Pancreas (tissue), 10 donors: ENCODE measurements at regions of chr12 and their contacts with region 1.

Region 1: DNA sequence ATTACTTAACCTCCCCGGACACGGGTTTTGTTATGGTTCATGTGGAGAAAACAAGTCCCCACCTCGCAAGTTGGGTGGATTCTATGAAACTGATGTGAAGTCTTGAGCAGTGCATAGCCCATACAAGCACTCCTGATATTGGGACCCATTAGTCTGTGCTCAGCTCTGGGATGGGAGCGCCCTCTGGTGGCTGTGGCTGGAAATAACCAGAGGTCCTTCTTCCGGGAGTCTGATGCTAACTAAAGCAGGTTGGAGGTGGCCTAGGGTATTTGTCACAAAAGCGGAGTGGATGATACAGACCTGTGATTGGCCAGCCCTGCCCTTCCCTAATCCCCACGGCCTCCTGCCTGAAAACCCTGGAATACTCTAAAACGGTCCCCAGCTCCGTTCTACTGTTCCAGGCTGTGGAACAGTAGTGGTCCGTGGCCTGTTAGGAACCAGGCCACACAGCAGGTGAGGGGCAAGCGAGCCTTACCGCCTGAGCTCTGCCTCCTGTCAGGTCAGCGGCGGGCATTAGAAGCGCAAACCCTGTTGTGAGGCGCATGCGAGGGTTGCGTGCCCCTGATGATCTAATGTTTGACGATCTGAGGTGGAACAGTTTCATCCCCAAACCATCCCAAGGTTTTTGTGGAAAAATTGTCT is 6.4 kb downstream of the SLC48A1 start:
- DNase-seq: peak; percentile 74 to 99 (median 90)
- ATAC-seq: peak; percentile 81 to 92 (median 88)
- H3K4me3 ChIP-seq: no peak overlapping the region
- H3K27ac ChIP-seq: no peak overlapping the region
- H3K4me1 ChIP-seq: peaks cover 0 to 5% (median 0%) of the 10 kb centered on the region in 3 donors
- H3K27me3 ChIP-seq: no peaks in the 10 kb centered on the region
- CTCF ChIP-seq: peak; percentile 85 to 91 (median 90)

Region 2: GRCh38 chr12:47032644-47033043 is 746.8 kb before region 1 on chr12:
- intact Hi-C with region 1: loop called in 1 of 3 experiments (anchors 5 kb)
- DNase-seq: no peak
- ATAC-seq: peak; percentile 78 to 89 (median 86)
- H3K4me3 ChIP-seq: no peak overlapping the region
- H3K27ac ChIP-seq: no peak overlapping the region
- H3K4me1 ChIP-seq: peaks cover 4 to 10% (median 5%) of the 10 kb centered on the region in 3 donors
- H3K27me3 ChIP-seq: no peaks in the 10 kb centered on the region
- CTCF ChIP-seq: peak in 2 of 4 donors; percentile 28 to 44

Region 3: GRCh38 chr12:47715393-47715876 is 64.0 kb before region 1 on chr12:
- intact Hi-C with region 1: loop called in 2 of 3 experiments (anchors 5 to 10 kb)
- DNase-seq: peak in 4 of 6 donors; percentile 64 to 75 (median 70)
- ATAC-seq: peak; percentile 69 to 86 (median 84)
- H3K4me3 ChIP-seq: no peak overlapping the region
- H3K27ac ChIP-seq: peak overlapping the region in 2 of 4 donors; percentile 2 to 46
- H3K4me1 ChIP-seq: peaks cover 0 to 20% (median 0%) of the 10 kb centered on the region in 3 donors
- H3K27me3 ChIP-seq: no peaks in the 10 kb centered on the region
- CTCF ChIP-seq: peak; percentile 49 to 74 (median 62)

Region 4: DNA sequence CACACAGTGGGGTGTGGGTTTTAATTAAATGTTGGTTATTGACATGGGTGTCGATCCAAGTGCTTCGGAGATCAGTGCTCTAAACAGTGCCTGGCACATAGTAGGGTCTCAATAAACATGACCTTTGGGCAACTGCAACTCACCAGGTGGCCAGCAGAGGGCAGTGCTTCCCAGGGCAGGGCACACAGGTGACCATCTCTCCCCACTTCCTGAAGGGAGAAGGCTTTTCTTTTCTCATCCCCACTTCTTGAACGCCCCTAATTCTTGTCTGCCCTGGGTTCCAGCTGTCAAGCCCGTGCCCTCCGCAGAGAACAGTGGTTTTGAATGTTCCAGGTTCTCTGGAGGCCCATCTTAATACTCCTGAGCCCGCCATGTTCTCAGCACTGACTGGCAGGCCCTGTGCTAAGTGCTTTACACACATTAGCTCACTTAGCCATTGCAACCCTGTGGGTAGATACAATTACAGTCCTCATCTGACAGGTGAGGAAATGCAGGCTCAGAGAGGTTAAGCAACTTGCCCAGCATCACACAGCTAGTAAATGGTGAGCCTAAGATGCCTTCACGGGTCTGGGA is 37.1 kb before region 1 on chr12:
- intact Hi-C with region 1: loop called in 2 of 3 experiments (anchors 5 kb)
- DNase-seq: peak in 3 of 6 donors; percentile 61 to 86 (median 62)
- ATAC-seq: peak in 3 of 4 donors; percentile 28 to 51 (median 46)
- H3K4me3 ChIP-seq: no peak overlapping the region
- H3K27ac ChIP-seq: no peak overlapping the region
- H3K4me1 ChIP-seq: peaks cover 0 to 8% (median 6%) of the 10 kb centered on the region in 3 donors
- H3K27me3 ChIP-seq: no peaks in the 10 kb centered on the region
- CTCF ChIP-seq: peak; percentile 80 to 96 (median 93)

Region 5: DNA sequence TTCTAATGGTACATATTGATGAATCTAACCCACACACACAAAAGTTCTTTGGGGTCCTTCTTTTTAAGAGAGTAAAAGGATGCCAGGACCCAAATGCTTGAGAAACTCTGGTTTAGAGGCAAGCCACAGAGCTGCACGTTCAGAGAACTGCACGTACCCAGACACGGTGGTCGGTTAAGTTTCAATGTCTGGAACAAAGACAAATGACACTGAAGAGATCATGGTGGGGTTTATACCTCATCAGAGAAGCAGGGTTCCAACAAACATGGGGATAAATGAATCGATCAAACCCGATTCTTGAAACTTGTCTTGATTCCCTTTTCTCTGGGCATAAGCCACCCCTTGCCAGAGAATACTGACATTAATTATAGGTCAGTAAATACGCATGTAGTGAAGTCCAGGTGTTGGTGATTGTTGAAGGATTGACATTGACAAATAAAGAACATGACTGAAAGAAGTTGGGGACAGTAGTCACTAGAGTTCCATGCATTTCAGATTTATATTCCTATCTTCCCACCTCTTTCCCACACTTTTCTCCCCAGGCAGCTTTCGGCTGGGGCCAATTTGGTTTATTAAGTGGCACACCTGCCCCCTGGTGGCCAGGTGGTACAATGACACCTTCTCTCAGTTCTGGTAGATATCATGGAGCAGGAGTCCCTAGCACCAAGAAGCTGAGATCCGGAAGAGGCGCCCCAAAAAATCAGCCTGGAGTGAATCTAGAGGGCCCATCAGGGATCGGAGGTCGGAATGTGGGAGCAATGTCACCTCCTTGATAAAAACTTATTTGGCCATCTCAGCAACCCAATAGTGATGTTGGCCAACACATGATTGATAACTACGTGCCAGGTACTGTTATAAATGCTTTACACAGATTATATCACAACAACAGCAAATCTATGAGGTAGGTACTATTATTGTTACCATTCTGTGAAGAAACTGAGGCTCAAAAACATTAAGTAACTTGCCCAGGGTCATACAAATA is 58.1 kb after region 1 on chr12:
- intact Hi-C with region 1: loop called in 1 of 3 experiments (anchors 10 kb)
- DNase-seq: peak; percentile 47 to 83 (median 70)
- ATAC-seq: peak; percentile 84 to 94 (median 89)
- H3K4me3 ChIP-seq: no peak overlapping the region
- H3K27ac ChIP-seq: no peak overlapping the region
- H3K4me1 ChIP-seq: no peaks in the 10 kb centered on the region
- H3K27me3 ChIP-seq: no peaks in the 10 kb centered on the region
- CTCF ChIP-seq: peak; percentile 86 to 97 (median 92)

Region 6: DNA sequence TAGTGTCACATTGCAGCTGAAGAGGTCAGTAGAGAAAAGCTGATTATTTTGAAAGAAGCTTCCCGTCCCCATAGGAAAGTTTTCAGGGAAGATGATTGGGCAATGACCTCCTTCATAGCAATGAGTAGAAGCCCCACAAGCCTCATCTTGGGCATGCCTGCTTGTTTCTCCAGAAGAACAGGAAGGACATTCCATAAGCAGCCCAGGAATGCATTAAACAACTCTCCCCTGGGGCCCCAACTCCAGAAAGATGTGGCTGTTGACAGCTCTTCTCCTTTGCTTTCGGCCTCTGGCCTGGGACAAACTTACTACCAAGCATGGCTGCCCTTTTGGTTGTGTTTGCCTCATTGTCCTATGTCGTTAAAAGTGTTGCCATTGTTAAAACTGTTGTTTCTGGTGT is 131.1 kb after region 1 on chr12:
- intact Hi-C with region 1: no loop called
- DNase-seq: no peak
- ATAC-seq: no peak
- H3K4me3 ChIP-seq: no peak overlapping the region
- H3K27ac ChIP-seq: no peak overlapping the region
- H3K4me1 ChIP-seq: no peaks in the 10 kb centered on the region
- H3K27me3 ChIP-seq: no peaks in the 10 kb centered on the region
- CTCF ChIP-seq: no peak